ENCODE measurements at regions of chr1 and their contacts with region 1.

Region 1: GRCh38 chr1:242477944-242478343 is 46.6 kb downstream of the PLD5 start:
- DNase-seq: no peak

Region 2: GRCh38 chr1:242456726-242457269 is 21.1 kb before region 1 on chr1:
- CTCF ChIA-PET with region 1: interaction called, 11 read pairs
- POLR2A ChIA-PET with region 1: no interaction called
- DNase-seq: no peak

Region 3: GRCh38 chr1:242506724-242507123 is 28.8 kb after region 1 on chr1:
- CTCF ChIA-PET with region 1: no interaction called
- POLR2A ChIA-PET with region 1: no interaction called
- DNase-seq: no peak

Region 4: DNA sequence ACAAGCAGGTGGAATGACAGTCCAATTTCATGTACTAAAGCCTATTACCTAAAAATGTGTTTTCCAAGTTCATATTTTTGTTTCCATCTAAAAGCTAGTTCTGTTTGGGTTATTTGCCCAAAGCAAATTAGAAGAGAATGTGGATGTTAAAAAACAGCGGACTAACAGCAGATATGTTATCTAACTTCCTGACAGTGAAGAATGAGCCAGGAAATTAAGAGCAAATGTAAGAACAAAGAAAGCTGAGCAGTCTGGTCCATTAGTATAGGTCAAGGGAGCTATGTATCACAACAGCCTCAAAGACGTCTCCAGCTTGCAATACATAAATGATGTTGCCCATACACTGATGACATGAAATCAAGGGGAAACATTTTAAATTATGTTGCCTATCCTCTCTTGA is 192.1 kb after region 1 on chr1:
- CTCF ChIA-PET with region 1: no interaction called
- POLR2A ChIA-PET with region 1: no interaction called
- DNase-seq: no peak